Naive thymus-derived CD4-positive, alpha-beta T cell (primary cell): ENCODE measurements at regions of chr11 and their contacts with region 1.

Region 1: GRCh38 chr11:75233742-75234172 is 6.8 kb upstream of the TPBGL start:
- DNase-seq: peak in 2 of 9 donors; percentile 27 to 28
- ATAC-seq: no peak
- H3K4me3 ChIP-seq: no peak overlapping the region
- H3K4me3 Mint-ChIP-seq: no peak overlapping the region
- H3K27ac ChIP-seq: no peak overlapping the region
- H3K27ac Mint-ChIP-seq: no peak overlapping the region
- H3K4me1 ChIP-seq: no peaks in the 10 kb centered on the region
- H3K4me1 Mint-ChIP-seq: no peaks in the 10 kb centered on the region
- H3K27me3 ChIP-seq: no peaks in the 10 kb centered on the region
- H3K27me3 Mint-ChIP-seq: peaks cover 10 to 29% (median 17%) of the 10 kb centered on the region in 5 donors

Region 2: GRCh38 chr11:75214411-75214821 is 19.3 kb before region 1 on chr11:
- CTCF ChIA-PET with region 1: no interaction called
- POLR2A ChIA-PET with region 1: no interaction called
- intact Hi-C with region 1: loop called (anchors 1 kb)
- DNase-seq: peak; percentile 33 to 82 (median 68)
- ATAC-seq: peak; percentile 87
- H3K4me3 ChIP-seq: no peak overlapping the region
- H3K4me3 Mint-ChIP-seq: no peak overlapping the region
- H3K27ac ChIP-seq: no peak overlapping the region
- H3K27ac Mint-ChIP-seq: peak overlapping the region in 1 of 9 donors; percentile 9
- H3K4me1 ChIP-seq: no peaks in the 10 kb centered on the region
- H3K4me1 Mint-ChIP-seq: peaks cover 0 to 3% (median 0%) of the 10 kb centered on the region in 7 donors
- H3K27me3 ChIP-seq: no peaks in the 10 kb centered on the region
- H3K27me3 Mint-ChIP-seq: peaks cover 16 to 39% (median 30%) of the 10 kb centered on the region in 5 donors

Region 3: GRCh38 chr11:75399344-75400145 is 165.8 kb after region 1 on chr11 and contains the start of gene RPS3:
- CTCF ChIA-PET with region 1: no interaction called
- POLR2A ChIA-PET with region 1: no interaction called
- intact Hi-C with region 1: no loop called
- DNase-seq: peak; percentile 81 to 91 (median 88)
- ATAC-seq: peak; percentile 96
- H3K4me3 ChIP-seq: peak within 1 kb of the TSS; percentile 80
- H3K4me3 Mint-ChIP-seq: peak within 1 kb of the TSS; percentile 87 to 99 (median 94)
- H3K27ac ChIP-seq: peak within 1 kb of the TSS; percentile 86
- H3K27ac Mint-ChIP-seq: peak within 1 kb of the TSS; percentile 94 to 99 (median 96)
- H3K4me1 ChIP-seq: peaks cover 16 to 17% of the 10 kb centered on the region in 2 donors
- H3K4me1 Mint-ChIP-seq: peaks cover 20 to 54% (median 48%) of the 10 kb centered on the region in 7 donors
- H3K27me3 ChIP-seq: no peaks in the 10 kb centered on the region
- H3K27me3 Mint-ChIP-seq: peaks cover 0 to 11% (median 0%) of the 10 kb centered on the region in 5 donors
- total RNA-seq, gene RPS3: 3,135 to 5,501 (median 5,089) TPM